ENCODE measurements at regions of chr7 and their contacts with region 1.

Region 1: DNA sequence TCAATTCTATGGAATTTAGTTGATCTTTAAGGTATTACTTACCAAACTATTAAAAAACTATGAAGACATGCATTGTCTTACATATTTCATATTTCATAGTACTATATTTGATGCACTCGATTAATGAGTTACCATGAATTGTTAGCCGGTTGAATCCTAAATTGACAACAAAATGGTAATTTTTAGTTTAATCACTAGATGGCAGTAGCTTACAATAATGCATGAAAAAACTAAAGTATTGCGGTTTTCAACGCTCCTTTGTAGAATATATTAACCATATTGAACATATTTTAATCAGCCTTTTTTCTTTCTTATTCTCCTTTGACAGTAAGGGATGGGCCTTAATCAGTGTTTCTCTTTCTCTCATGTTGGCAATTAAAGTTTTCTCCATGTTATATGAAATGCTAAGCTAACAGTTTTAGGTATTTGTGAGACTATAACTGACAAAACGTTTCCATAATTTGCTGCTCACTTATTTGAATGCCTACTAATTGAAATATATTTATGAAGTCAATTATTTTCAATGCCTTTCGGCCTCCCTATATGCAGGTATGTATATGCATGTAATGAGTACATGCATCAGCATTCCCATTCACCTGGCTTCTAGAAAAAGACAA is 48.5 kb upstream of the ARL4A start:
- DNase-seq: peak; percentile 39
- H3K4me3 ChIP-seq: no peak overlapping the region
- H3K27ac ChIP-seq: no peak overlapping the region
- H3K4me1 ChIP-seq: peaks cover 0 to 6% of the 10 kb centered on the region in 2 experiments; a peak in 3 of 4 replicates
- H3K27me3 ChIP-seq: no peaks in the 10 kb centered on the region; the same call in 1 of the 2 replicates
- CTCF ChIP-seq: peak; percentile 89
- EP300 ChIP-seq: no peak
- RAD21 ChIP-seq: peak; percentile 86

Region 2: DNA sequence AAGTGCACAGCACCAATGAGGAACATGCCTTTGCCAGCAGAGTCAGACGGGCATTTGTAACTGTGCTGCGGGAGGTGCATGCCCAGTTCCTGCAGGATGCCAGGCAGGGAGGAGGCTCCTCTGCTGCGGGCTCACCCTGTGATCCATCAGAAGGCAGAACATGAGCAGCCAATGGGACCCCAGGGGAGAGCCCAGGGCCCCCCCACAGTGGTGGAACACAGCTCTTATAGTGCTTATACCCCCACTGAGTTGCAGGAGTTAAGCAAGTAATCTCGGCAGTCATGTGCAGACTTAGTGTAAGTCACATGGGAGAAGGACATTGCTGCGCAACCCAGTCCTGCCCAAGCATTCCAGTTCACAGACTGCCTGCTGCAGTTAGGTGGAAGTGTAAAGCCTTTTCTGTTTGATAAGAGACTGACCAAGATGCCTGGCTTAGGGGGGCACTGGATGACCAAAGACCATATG is 548.2 kb before region 1 on chr7:
- CTCF ChIA-PET with region 1: no interaction called
- POLR2A ChIA-PET with region 1: no interaction called
- DNase-seq: peak; percentile 32
- H3K4me3 ChIP-seq: peak overlapping the region in 1 of 2 experiments; percentile 25; a peak in 1 of 4 replicates
- H3K27ac ChIP-seq: peak overlapping the region in 1 of 2 experiments; percentile 94; a peak in 2 of 4 replicates
- H3K4me1 ChIP-seq: peaks cover 0 to 30% of the 10 kb centered on the region in 2 experiments; a peak in 2 of 4 replicates
- H3K27me3 ChIP-seq: no peaks in the 10 kb centered on the region
- CTCF ChIP-seq: no peak
- EP300 ChIP-seq: no peak
- RAD21 ChIP-seq: no peak

Region 3: GRCh38 chr7:12518920-12519681 is 119.9 kb before region 1 on chr7:
- CTCF ChIA-PET with region 1: interaction called, 27 read pairs
- POLR2A ChIA-PET with region 1: no interaction called
- DNase-seq: peak; percentile 35
- H3K4me3 ChIP-seq: no peak overlapping the region
- H3K27ac ChIP-seq: no peak overlapping the region
- H3K4me1 ChIP-seq: no peaks in the 10 kb centered on the region
- H3K27me3 ChIP-seq: no peaks in the 10 kb centered on the region
- CTCF ChIP-seq: peak; percentile 52
- EP300 ChIP-seq: no peak
- RAD21 ChIP-seq: no peak

Region 4: DNA sequence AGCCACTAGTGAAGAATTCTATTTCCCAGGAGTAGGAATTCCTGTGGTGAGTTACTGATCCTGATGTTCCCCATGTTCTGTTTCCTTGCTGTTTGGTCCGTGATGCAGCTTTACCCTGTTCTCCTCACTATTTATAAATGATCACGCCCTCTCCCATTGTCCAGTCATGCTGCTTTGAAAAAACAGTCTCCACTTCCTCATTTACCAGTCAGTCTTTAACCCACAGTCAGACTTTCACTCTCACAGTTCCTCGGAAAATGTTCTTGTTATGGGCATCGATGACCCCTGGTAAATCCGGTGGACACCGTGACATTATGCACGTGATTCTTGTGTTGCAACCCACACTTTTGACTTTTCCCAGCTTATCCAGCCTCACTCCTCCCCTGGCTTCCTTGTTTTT is 54.0 kb before region 1 on chr7:
- CTCF ChIA-PET with region 1: no interaction called
- POLR2A ChIA-PET with region 1: no interaction called
- DNase-seq: no peak
- H3K4me3 ChIP-seq: no peak overlapping the region
- H3K27ac ChIP-seq: no peak overlapping the region
- H3K4me1 ChIP-seq: no peaks in the 10 kb centered on the region
- H3K27me3 ChIP-seq: no peaks in the 10 kb centered on the region
- CTCF ChIP-seq: no peak
- EP300 ChIP-seq: no peak
- RAD21 ChIP-seq: no peak

Region 5: DNA sequence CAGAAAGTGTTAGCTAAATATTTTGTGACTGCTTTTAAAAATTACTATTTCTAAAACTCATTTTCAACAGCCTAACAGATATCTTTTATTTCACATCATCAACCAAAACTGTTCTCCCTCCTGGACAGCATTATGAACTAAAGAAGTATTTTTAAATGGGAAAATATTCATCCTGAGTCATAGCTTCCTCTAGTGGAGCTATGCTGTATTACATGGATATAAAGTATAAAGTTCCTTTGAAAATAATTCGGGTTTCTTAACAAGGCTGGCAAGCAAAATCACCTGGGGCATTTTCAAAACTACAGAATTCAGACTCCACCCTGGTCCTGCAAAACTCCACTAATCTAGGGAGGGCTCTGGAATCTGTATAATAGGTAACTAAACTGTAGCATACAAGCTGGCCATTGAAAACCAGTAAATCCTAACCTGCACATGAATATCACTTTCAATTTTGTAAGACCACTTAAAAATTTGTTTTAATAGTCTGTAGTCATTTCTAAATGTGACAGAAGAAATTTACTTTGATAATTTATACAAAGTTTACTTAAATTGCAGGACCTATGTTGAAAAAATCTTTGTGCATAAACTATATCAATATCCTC is 15.0 kb before region 1 on chr7:
- CTCF ChIA-PET with region 1: interaction called, 13 read pairs
- POLR2A ChIA-PET with region 1: no interaction called
- DNase-seq: peak; percentile 29
- H3K4me3 ChIP-seq: peak overlapping the region in 1 of 2 experiments; percentile 19; a peak in 1 of 4 replicates
- H3K27ac ChIP-seq: no peak overlapping the region
- H3K4me1 ChIP-seq: peaks cover 0 to 4% of the 10 kb centered on the region in 2 experiments; a peak in 1 of 4 replicates
- H3K27me3 ChIP-seq: no peaks in the 10 kb centered on the region
- CTCF ChIP-seq: peak; percentile 99
- EP300 ChIP-seq: no peak
- RAD21 ChIP-seq: peak; percentile 79

Region 6: GRCh38 chr7:12649347-12649746 is 10.4 kb after region 1 on chr7:
- CTCF ChIA-PET with region 1: interaction called, 11 read pairs
- POLR2A ChIA-PET with region 1: no interaction called
- DNase-seq: no peak
- H3K4me3 ChIP-seq: no peak overlapping the region
- H3K27ac ChIP-seq: no peak overlapping the region
- H3K4me1 ChIP-seq: peaks cover 3 to 16% of the 10 kb centered on the region in 2 experiments; a peak in 3 of 4 replicates
- H3K27me3 ChIP-seq: no peaks in the 10 kb centered on the region
- CTCF ChIP-seq: no peak
- EP300 ChIP-seq: no peak
- RAD21 ChIP-seq: no peak

Region 7: DNA sequence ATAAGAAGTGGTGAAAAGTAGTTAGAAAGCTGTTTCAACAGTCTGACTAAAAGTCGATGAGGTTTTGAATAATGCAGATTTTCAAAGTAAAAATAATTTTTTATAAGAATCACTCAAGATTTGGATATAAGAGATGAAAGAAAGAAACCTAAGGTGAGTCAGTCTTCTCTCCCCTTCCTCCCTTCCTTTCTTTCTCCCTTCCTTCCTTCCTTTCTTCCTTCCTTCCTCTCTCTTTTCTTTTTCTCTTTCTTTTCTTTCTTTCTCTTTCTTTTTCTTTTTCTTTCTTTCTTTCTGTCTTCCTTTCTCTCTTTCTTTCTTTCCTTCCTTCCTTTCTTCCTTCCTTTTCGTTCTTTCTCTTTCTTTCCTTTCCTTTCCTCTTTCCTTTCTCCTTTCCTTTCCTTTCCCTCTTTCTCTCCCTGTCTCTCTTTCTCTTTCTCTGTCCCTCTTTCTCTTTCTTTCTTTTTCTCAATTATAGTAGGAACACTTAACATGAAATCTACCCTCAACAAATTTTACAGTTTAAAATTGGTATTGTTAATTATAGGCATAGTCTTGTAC is 357.0 kb after region 1 on chr7:
- CTCF ChIA-PET with region 1: no interaction called
- POLR2A ChIA-PET with region 1: no interaction called
- DNase-seq: no peak
- H3K4me3 ChIP-seq: no peak overlapping the region
- H3K27ac ChIP-seq: no peak overlapping the region
- H3K4me1 ChIP-seq: no peaks in the 10 kb centered on the region
- H3K27me3 ChIP-seq: 0 out of 2 replicates have a peak, but pooled peaks cover 3% of the 10 kb centered on the region
- CTCF ChIP-seq: no peak
- EP300 ChIP-seq: no peak
- RAD21 ChIP-seq: no peak

Region 8: GRCh38 chr7:13262929-13263530 is 624.1 kb after region 1 on chr7:
- CTCF ChIA-PET with region 1: interaction called, 23 read pairs
- POLR2A ChIA-PET with region 1: no interaction called
- DNase-seq: peak; percentile 5
- H3K4me3 ChIP-seq: no peak overlapping the region
- H3K27ac ChIP-seq: no peak overlapping the region
- H3K4me1 ChIP-seq: no peaks in the 10 kb centered on the region
- H3K27me3 ChIP-seq: no peaks in the 10 kb centered on the region; the same call in 1 of the 2 replicates
- CTCF ChIP-seq: peak; percentile 85
- EP300 ChIP-seq: no peak
- RAD21 ChIP-seq: peak; percentile 90